ENCODE measurements at regions of chr12 and their contacts with region 1.

Region 1: GRCh38 chr12:6873094-6874014 is at the start of gene SPSB2:
- DNase-seq: peak; percentile 99
- H3K4me3 Mint-ChIP-seq: peak within 1 kb of the TSS; percentile 87
- H3K27ac Mint-ChIP-seq: peak within 1 kb of the TSS; percentile 89
- H3K4me1 Mint-ChIP-seq: peaks cover 51% of the 10 kb centered on the region
- H3K27me3 Mint-ChIP-seq: no peaks in the 10 kb centered on the region
- total RNA-seq, gene SPSB2: 3.8 to 4.7 TPM

Region 2: GRCh38 chr12:6839482-6840201 is 33.7 kb before region 1 on chr12:
- CTCF ChIA-PET with region 1: interaction called, 16 read pairs
- POLR2A ChIA-PET with region 1: interaction called, 5 read pairs
- intact Hi-C with region 1: loop called (anchors 1 kb)
- DNase-seq: no peak
- H3K4me3 Mint-ChIP-seq: no peak overlapping the region
- H3K27ac Mint-ChIP-seq: no peak overlapping the region
- H3K4me1 Mint-ChIP-seq: peaks cover 2% of the 10 kb centered on the region
- H3K27me3 Mint-ChIP-seq: no peaks in the 10 kb centered on the region

Region 3: DNA sequence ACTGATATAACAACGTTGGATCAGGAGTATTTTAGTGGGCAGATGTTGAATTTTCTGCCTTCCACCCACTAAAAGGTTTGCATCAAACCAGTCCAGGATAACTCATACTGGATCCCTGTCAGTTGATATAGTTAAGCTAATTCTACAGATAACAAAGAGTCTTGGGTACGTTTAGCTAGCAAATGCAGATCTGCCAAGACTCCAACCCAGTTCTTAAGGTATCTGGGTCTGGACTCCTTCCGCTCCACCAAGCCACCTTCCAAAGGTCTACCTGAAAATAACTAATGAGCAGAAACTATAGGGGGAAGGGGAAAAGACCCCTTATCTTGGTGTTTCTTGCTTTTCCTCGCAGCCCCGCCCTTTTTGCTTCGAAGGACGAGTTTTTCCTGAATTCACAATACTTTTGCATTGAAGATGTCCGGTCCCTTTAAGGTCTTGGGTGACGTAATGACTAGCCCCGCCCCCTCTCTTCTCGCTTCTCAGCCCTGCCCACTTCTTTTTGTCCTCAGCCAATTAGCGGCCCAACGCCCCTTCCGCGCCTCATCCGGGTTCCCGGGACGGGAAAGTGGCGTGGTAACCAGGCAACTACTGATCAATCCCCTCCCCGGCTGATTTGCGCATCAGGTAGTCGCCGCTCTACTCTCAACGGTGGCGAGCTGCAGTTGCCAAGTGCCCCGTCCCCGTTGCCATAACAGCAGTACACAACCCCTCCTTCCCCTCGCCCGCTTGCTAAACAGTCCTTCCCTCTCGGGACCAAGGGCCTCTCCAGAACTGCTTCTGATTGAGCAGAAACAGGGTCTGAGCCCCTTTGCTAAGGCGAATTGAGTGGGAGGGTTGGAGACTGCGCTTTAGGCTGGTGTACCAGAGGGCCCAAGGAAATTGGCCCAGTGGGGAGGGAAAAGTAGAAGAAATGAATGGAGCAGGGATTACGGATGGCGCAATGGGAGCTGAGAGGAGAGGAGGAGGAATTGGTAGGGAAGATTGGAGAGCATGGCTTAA is 31.2 kb after region 1 on chr12 and contains the start of gene LRRC23:
- CTCF ChIA-PET with region 1: interaction called, 23 read pairs
- POLR2A ChIA-PET with region 1: interaction called, 8 read pairs
- intact Hi-C with region 1: loop called (anchors 1 kb)
- DNase-seq: peak; percentile 99
- H3K4me3 Mint-ChIP-seq: no peak within 1 kb of the TSS
- H3K27ac Mint-ChIP-seq: no peak within 1 kb of the TSS
- H3K4me1 Mint-ChIP-seq: peaks cover 5% of the 10 kb centered on the region
- H3K27me3 Mint-ChIP-seq: no peaks in the 10 kb centered on the region
- total RNA-seq, gene LRRC23: 6.8 to 7.8 TPM

Region 4: GRCh38 chr12:6937481-6938297 is 64.3 kb after region 1 on chr12:
- CTCF ChIA-PET with region 1: interaction called, 18 read pairs
- POLR2A ChIA-PET with region 1: interaction called, 18 read pairs
- intact Hi-C with region 1: no loop called
- DNase-seq: peak; percentile 96
- H3K4me3 Mint-ChIP-seq: peak overlapping the region; percentile 76
- H3K27ac Mint-ChIP-seq: peak overlapping the region; percentile 94
- H3K4me1 Mint-ChIP-seq: peaks cover 44% of the 10 kb centered on the region
- H3K27me3 Mint-ChIP-seq: no peaks in the 10 kb centered on the region

Region 5: GRCh38 chr12:7018350-7019042 is 145.1 kb after region 1 on chr12 and contains the start of gene LPCAT3:
- CTCF ChIA-PET with region 1: no interaction called
- POLR2A ChIA-PET with region 1: no interaction called
- intact Hi-C with region 1: loop called (anchors 2 kb)
- DNase-seq: peak; percentile 98
- H3K4me3 Mint-ChIP-seq: peak within 1 kb of the TSS; percentile 88
- H3K27ac Mint-ChIP-seq: peak within 1 kb of the TSS; percentile 73
- H3K4me1 Mint-ChIP-seq: peaks cover 26% of the 10 kb centered on the region
- H3K27me3 Mint-ChIP-seq: no peaks in the 10 kb centered on the region
- total RNA-seq, gene LPCAT3: 18.3 to 20.5 TPM